Mammary epithelial cell (primary cell): ENCODE measurements at regions of chr2 and their contacts with region 1.

Region 1: GRCh38 chr2:229273723-229274338 is 2.7 kb upstream of the PID1 start:
- DNase-seq: peak; percentile 72
- H3K4me3 ChIP-seq: peak overlapping the region; percentile 14 to 22 (median 21)
- H3K27ac ChIP-seq: no peak overlapping the region
- H3K4me1 ChIP-seq: peaks cover 13% of the 10 kb centered on the region
- H3K27me3 ChIP-seq: no peaks in the 10 kb centered on the region
- CTCF ChIP-seq: peak; percentile 79 to 85

Region 2: DNA sequence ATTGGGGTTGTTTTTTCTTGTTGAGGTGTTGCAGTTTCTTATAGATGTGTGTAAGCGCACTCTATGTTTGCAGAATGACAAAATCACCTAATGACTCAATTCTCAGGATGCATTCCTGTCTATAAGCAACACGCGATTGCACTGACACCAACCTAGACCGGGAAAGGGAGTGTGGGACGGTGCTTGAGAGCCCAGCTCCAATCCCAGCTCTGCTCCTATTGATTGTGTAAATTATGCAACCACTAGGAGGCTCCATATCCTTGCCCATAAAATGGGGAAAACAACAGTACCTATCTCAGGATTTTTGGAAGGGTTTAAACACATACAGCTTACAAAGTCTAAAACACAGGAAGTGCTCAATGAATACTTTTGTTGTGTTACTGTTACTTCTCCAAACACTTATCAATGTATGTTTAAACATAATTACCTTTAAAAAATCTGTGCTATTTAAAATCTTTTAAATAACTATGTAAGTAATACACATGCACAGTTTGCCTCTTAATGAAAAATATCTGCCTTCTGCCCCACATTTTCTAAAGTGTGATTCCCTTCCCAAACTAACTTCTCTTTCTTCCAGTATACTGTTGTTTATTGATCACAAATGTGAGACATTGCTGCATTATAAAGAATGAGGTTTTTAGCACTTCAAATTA is 1224.9 kb before region 1 on chr2:
- CTCF ChIA-PET with region 1: no interaction called
- dilution Hi-C with region 1: no loop called
- in situ Hi-C with region 1: no loop called
- intact Hi-C with region 1: loop called (anchors 5 kb)
- DNase-seq: peak; percentile 59
- H3K4me3 ChIP-seq: no peak overlapping the region
- H3K27ac ChIP-seq: no peak overlapping the region
- H3K4me1 ChIP-seq: no peaks in the 10 kb centered on the region
- H3K27me3 ChIP-seq: no peaks in the 10 kb centered on the region
- CTCF ChIP-seq: peak; percentile 58 to 73

Region 3: DNA sequence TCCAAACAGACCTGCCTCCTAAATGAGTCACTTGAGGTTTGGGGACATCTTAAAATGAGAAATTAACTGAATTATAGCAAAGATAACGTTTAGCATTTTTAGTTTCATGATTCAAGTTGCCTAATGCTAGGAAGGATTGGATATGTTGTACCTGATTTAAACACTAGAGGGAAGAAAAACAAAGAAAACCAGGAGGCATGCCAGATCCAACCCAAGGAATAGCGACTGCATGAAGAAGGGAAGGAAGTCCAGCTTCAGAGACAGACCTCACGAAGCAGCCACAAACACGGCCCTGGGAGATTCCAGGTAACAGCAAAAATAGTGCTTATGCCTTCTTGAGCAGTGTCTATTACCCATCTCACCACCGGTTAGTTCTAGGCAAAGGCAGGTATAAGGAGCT is 592.4 kb before region 1 on chr2:
- CTCF ChIA-PET with region 1: interaction called, 4 read pairs
- dilution Hi-C with region 1: no loop called
- in situ Hi-C with region 1: loop called in 1 of 2 experiments (anchors 25 kb)
- intact Hi-C with region 1: loop called (anchors 1 kb)
- DNase-seq: peak; percentile 42
- H3K4me3 ChIP-seq: no peak overlapping the region
- H3K27ac ChIP-seq: no peak overlapping the region
- H3K4me1 ChIP-seq: no peaks in the 10 kb centered on the region
- H3K27me3 ChIP-seq: peaks cover 3% of the 10 kb centered on the region
- CTCF ChIP-seq: peak; percentile 49 to 60

Region 4: GRCh38 chr2:229190186-229190585 is 83.6 kb before region 1 on chr2:
- CTCF ChIA-PET with region 1: no interaction called
- dilution Hi-C with region 1: no loop called
- in situ Hi-C with region 1: no loop called
- intact Hi-C with region 1: no loop called
- DNase-seq: no peak
- H3K4me3 ChIP-seq: no peak overlapping the region
- H3K27ac ChIP-seq: no peak overlapping the region
- H3K4me1 ChIP-seq: no peaks in the 10 kb centered on the region
- H3K27me3 ChIP-seq: no peaks in the 10 kb centered on the region
- CTCF ChIP-seq: no peak